ENCODE measurements at regions of chr3 and their contacts with region 1.

Region 1: DNA sequence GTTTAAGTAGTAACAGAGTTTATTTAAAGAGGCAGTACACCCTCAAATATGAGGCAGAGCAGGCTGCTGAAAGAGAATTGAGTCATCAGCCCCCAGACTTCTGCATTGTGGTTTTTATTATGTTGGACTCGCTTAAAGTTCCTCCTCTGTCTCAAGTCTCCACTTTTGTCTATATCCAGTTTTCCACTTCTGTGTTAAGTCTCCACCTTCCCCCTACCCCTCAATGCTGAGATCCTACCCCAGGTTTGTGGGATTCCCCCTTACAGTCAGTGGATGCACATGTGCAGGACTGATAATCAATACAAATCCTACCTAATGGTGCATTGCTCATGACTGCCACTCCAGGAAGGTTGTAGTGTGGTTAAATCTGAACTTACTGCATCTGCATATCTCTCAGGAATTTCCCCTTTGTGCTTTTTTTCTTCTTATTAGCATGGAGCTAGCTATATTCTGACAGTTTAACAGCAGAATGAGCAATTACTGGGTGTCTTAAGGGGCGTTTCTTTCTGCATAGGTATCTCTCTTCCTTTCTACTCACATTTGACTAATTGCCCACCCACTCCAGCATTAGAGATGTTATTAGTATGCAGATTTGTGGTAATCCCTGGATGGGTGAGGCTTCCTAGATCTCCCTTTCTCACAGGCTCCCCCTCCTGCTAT is 11.9 kb upstream of the CD200R1L start:
- DNase-seq: no peak
- ATAC-seq: no peak
- H3K4me3 ChIP-seq: no peak overlapping the region
- H3K27ac ChIP-seq: no peak overlapping the region
- H3K4me1 ChIP-seq: no peaks in the 10 kb centered on the region
- H3K27me3 ChIP-seq: no peaks in the 10 kb centered on the region
- CTCF ChIP-seq: no peak

Region 2: GRCh38 chr3:112531358-112531781 is 327.2 kb before region 1 on chr3:
- CTCF ChIA-PET with region 1: no interaction called
- POLR2A ChIA-PET with region 1: interaction called, 13 read pairs
- in situ Hi-C with region 1: no loop called
- intact Hi-C with region 1: no loop called
- DNase-seq: no peak
- ATAC-seq: no peak
- H3K4me3 ChIP-seq: no peak overlapping the region
- H3K27ac ChIP-seq: no peak overlapping the region
- H3K4me1 ChIP-seq: no peaks in the 10 kb centered on the region
- H3K27me3 ChIP-seq: no peaks in the 10 kb centered on the region
- CTCF ChIP-seq: peak; percentile 68; the same call in 1 of the 2 replicates

Region 3: GRCh38 chr3:112730193-112730592 is 128.3 kb before region 1 on chr3:
- CTCF ChIA-PET with region 1: no interaction called
- POLR2A ChIA-PET with region 1: no interaction called
- in situ Hi-C with region 1: no loop called
- intact Hi-C with region 1: no loop called
- DNase-seq: no peak
- ATAC-seq: no peak
- H3K4me3 ChIP-seq: no peak overlapping the region
- H3K27ac ChIP-seq: no peak overlapping the region
- H3K4me1 ChIP-seq: no peaks in the 10 kb centered on the region
- H3K27me3 ChIP-seq: no peaks in the 10 kb centered on the region
- CTCF ChIP-seq: no peak